ENCODE measurements at regions of chr6 and their contacts with region 1.

Region 1: DNA sequence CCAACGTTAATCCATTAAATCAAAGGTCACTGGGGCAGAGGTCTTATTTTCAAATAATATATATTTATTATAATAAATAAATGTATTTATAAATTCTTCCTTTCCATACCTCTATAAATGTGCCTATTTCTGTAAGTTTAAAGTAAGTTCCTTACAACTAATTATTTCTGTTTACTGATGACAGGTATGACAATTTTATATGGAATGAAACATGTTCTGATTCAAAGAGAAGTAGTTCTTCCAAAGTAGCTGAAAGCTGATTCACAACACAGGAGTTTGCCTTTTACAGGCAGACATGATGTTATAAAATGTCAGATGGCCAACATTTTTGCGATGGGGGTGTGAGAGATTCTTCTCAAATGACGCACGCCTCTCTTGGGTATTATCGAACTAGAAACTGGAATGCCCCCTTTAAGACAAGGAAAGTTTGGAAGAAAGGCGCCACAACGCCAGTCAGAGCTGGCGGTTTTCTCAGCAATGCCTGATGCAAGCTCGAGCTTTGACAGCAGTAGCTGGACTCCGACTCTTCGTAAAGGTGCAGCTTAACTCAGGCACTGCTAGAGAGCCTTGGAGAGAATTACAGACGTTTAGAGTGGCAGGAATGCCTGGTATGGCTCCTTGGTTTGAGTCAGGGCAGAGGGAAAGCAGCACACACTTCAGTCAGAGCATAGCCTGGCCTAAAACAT is 92.1 kb downstream of the FOXC1 start:
- DNase-seq: peak; percentile 71 to 83
- ATAC-seq: peak; percentile 77
- H3K4me3 ChIP-seq: no peak overlapping the region
- H3K27ac ChIP-seq: peak overlapping the region; percentile 91 to 92
- H3K4me1 ChIP-seq: peaks cover 0 to 18% of the 10 kb centered on the region in 2 donors
- H3K27me3 ChIP-seq: no peaks in the 10 kb centered on the region

Region 2: GRCh38 chr6:1562171-1562955 is 139.4 kb before region 1 on chr6:
- intact Hi-C with region 1: no loop called
- DNase-seq: no peak
- ATAC-seq: no peak
- H3K4me3 ChIP-seq: no peak overlapping the region
- H3K27ac ChIP-seq: no peak overlapping the region
- H3K4me1 ChIP-seq: no peaks in the 10 kb centered on the region
- H3K27me3 ChIP-seq: no peaks in the 10 kb centered on the region

Region 3: GRCh38 chr6:1767481-1768251 is 65.9 kb after region 1 on chr6:
- intact Hi-C with region 1: loop called (anchors 10 kb)
- DNase-seq: no peak
- ATAC-seq: peak; percentile 70
- H3K4me3 ChIP-seq: no peak overlapping the region
- H3K27ac ChIP-seq: no peak overlapping the region
- H3K4me1 ChIP-seq: peaks cover 0 to 10% of the 10 kb centered on the region in 2 donors
- H3K27me3 ChIP-seq: no peaks in the 10 kb centered on the region

Region 4: DNA sequence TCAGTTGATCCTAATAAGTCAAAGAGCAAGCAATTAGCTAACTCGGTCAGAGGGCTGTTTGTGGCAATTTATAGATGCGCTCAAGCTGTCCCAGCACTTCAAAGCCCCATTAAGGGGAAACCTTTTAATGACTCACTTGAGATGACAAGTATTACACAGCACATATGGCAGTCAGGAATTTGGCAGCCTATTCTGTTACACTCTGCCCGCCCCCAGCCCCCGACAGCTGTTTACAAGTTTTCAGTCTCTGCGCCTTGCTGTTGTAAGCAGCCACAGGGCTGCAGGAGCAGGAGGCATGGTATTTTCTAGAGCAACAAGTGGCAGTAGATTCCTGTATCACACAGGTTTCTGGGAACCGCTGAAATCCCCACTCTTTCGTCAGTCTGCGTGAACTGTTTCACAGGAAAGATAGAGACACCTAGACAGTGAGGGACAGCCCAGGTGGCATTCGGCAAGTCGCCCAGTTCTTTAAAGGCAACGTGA is 170.9 kb after region 1 on chr6:
- intact Hi-C with region 1: loop called in 1 of 2 experiments (anchors 10 kb)
- DNase-seq: no peak
- ATAC-seq: peak; percentile 20
- H3K4me3 ChIP-seq: no peak overlapping the region
- H3K27ac ChIP-seq: peak overlapping the region; percentile 71 to 85
- H3K4me1 ChIP-seq: peaks cover 5 to 7% of the 10 kb centered on the region in 2 donors
- H3K27me3 ChIP-seq: no peaks in the 10 kb centered on the region

Region 5: GRCh38 chr6:1893470-1894130 is 191.8 kb after region 1 on chr6:
- intact Hi-C with region 1: loop called in 1 of 2 experiments (anchors 5 kb)
- DNase-seq: no peak
- ATAC-seq: peak; percentile 51
- H3K4me3 ChIP-seq: no peak overlapping the region
- H3K27ac ChIP-seq: peak overlapping the region; percentile 93 to 94
- H3K4me1 ChIP-seq: peaks cover 0 to 10% of the 10 kb centered on the region in 2 donors
- H3K27me3 ChIP-seq: no peaks in the 10 kb centered on the region

Region 6: GRCh38 chr6:2097464-2097863 is 395.7 kb after region 1 on chr6:
- intact Hi-C with region 1: loop called in 1 of 2 experiments (anchors 10 kb)
- DNase-seq: no peak
- ATAC-seq: no peak
- H3K4me3 ChIP-seq: peak overlapping the region; percentile 31 to 48
- H3K27ac ChIP-seq: peak overlapping the region; percentile 47 to 76
- H3K4me1 ChIP-seq: peaks cover 0 to 2% of the 10 kb centered on the region in 2 donors
- H3K27me3 ChIP-seq: no peaks in the 10 kb centered on the region